Dorsolateral prefrontal cortex (tissue), 120 donors: ENCODE measurements at regions of chr1 and their contacts with region 1.

Region 1: GRCh38 chr1:225772323-225772768 is 5.3 kb upstream of the SRP9 start:
- DNase-seq: peak; percentile 48 to 86 (median 84)
- H3K4me3 ChIP-seq: peak overlapping the region in 5 of 59 donors; percentile 1 to 24 (median 6)
- H3K27ac ChIP-seq: peak overlapping the region in 48 of 59 donors; percentile 3 to 87 (median 60)
- H3K27me3 ChIP-seq: no peaks in the 10 kb centered on the region
- CTCF ChIP-seq: peak; percentile 54 to 96 (median 85)

Region 2: GRCh38 chr1:225561675-225562074 is 210.7 kb before region 1 on chr1:
- intact Hi-C with region 1: loop called in 1 of 2 experiments (anchors 5 kb)
- DNase-seq: no peak
- H3K4me3 ChIP-seq: no peak overlapping the region
- H3K27ac ChIP-seq: no peak overlapping the region
- H3K27me3 ChIP-seq: no peaks in the 10 kb centered on the region
- CTCF ChIP-seq: no peak